ENCODE measurements at regions of chr19 and their contacts with region 1.

Region 1: GRCh38 chr19:58408152-58409009 is at the start of gene ZNF584:
- DNase-seq: peak; percentile 94
- H3K4me3 ChIP-seq: peak within 1 kb of the TSS; percentile 51 to 93 (median 66)
- H3K27ac ChIP-seq: peak within 1 kb of the TSS; percentile 27
- H3K4me1 ChIP-seq: peaks cover 15% of the 10 kb centered on the region
- H3K27me3 ChIP-seq: no peaks in the 10 kb centered on the region
- CTCF ChIP-seq: peak in 1 of 2 donors; percentile 33
- POLR2A ChIP-seq: peak; percentile 97
- total RNA-seq, gene ZNF584: 12.4 and 12.6 TPM in 2 replicates

Region 2: DNA sequence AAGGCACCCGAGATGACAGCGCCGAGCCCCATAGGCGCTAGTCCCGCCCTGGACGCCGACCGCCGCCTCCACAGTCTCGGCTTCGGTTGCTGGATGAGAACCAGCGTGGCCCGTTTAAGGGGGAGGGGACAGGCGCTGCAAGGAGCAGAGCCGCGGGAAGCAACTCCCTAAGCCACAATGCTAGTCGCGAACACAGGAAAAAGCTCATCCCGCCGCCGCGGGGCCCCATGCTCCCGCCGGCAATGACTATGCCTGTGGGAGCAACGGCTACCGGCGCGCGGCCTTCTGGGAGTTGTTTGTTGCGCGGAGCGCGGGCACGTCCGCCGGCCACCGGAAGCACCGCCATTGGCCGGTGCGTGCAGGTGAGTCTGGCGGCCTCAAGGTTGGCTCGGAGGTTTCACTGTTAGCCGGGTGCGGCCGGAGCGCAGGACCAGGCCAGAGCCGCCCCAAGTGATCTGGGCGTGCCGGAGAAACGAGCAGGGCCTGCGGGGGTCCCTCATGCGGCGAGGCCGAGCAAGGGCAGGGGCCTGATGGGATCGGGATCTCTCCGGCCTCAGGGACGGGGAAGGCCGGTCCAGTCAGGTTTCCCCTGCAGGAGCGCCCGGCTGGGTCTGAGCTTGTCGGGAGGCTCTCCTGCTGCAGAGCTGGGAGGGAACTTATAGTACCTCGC is 179.7 kb before region 1 on chr19 and contains the start of gene ZNF544:
- CTCF ChIA-PET with region 1: no interaction called
- POLR2A ChIA-PET with region 1: no interaction called
- dilution Hi-C with region 1: no loop called
- intact Hi-C with region 1: loop called (anchors 2 kb)
- DNase-seq: peak; percentile 84
- H3K4me3 ChIP-seq: peak within 1 kb of the TSS; percentile 53 to 66 (median 61)
- H3K27ac ChIP-seq: peak within 1 kb of the TSS; percentile 42
- H3K4me1 ChIP-seq: peaks cover 10% of the 10 kb centered on the region
- H3K27me3 ChIP-seq: no peaks in the 10 kb centered on the region
- CTCF ChIP-seq: peak; percentile 6 to 40
- POLR2A ChIP-seq: peak; percentile 92
- total RNA-seq, gene ZNF544: 39.3 and 45.4 TPM in 2 replicates

Region 3: GRCh38 chr19:58362272-58362994 is 45.9 kb before region 1 on chr19 and contains the start of gene ZNF497:
- CTCF ChIA-PET with region 1: interaction called, 3 read pairs
- POLR2A ChIA-PET with region 1: interaction called, 3 read pairs
- dilution Hi-C with region 1: no loop called
- intact Hi-C with region 1: loop called (anchors 1 kb)
- DNase-seq: peak; percentile 98
- H3K4me3 ChIP-seq: peak within 1 kb of the TSS; percentile 35 to 66 (median 51)
- H3K27ac ChIP-seq: peak within 1 kb of the TSS; percentile 57
- H3K4me1 ChIP-seq: peaks cover 3% of the 10 kb centered on the region
- H3K27me3 ChIP-seq: peaks cover 12 to 14% of the 10 kb centered on the region in 2 experiments
- CTCF ChIP-seq: peak in 1 of 2 donors; percentile 9
- POLR2A ChIP-seq: peak; percentile 93
- total RNA-seq, gene ZNF497: 0.42 and 1.3 TPM in 2 replicates

Region 4: DNA sequence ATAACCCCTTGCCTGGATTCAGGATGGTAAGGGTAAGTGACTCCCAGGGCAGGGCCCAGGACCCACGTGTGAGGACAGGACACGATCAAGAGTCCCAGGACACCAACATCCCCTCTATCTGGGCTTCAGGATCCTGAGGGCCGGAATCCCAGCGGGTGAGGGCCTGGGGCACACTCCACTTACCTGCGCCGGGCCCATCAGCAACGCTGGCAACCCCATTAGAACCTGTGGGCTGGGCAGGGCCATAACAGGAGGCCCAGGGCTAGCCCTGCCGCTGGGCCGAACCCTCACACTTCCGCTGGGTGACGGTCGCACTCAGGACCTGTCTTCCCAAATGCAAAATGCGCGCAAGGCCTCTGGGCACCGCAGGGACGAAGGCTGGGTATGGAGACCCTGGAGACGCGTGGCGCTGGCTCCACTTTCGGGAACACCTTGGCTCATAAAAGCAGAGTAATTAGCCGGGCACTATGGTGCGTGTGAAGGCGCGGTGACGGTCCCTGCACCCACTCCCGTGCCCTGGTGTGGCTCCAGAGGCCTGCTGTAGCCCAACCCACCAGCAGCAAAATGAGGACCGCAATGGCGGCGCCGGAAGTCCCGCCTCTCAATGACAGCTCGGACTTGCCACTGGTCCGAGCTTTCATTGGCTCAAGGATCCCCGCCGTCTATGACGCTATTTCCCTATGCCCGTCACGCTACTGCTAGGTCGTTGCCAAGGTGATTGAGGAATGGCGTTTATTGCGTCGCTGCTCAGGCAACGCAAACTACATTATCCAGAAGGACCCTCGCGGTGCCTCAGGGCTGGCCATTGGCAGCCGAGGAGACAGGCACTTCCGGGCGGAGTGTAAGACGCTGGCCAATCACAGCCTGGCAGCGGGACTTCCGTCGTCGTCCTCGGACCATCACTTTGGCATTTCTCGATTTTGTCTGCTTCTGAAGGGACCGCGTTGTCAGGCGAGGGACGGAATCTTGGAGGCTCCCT is 31.5 kb after region 1 on chr19 and contains the start of gene ZNF132:
- CTCF ChIA-PET with region 1: no interaction called
- POLR2A ChIA-PET with region 1: interaction called, 3 read pairs
- dilution Hi-C with region 1: no loop called
- intact Hi-C with region 1: loop called (anchors 1 kb)
- DNase-seq: peak; percentile 100
- H3K4me3 ChIP-seq: peak within 1 kb of the TSS; percentile 31 to 83 (median 57)
- H3K27ac ChIP-seq: peak within 1 kb of the TSS; percentile 48
- H3K4me1 ChIP-seq: peaks cover 7% of the 10 kb centered on the region
- H3K27me3 ChIP-seq: peaks cover 0 to 2% of the 10 kb centered on the region in 2 experiments
- CTCF ChIP-seq: no peak
- POLR2A ChIP-seq: peak; percentile 67
- total RNA-seq, gene ZNF132: 4.1 and 4.2 TPM in 2 replicates

Region 5: GRCh38 chr19:58475714-58476497 is 67.5 kb after region 1 on chr19 and contains the start of gene ZNF446:
- CTCF ChIA-PET with region 1: no interaction called
- POLR2A ChIA-PET with region 1: no interaction called
- dilution Hi-C with region 1: no loop called
- intact Hi-C with region 1: no loop called
- DNase-seq: peak; percentile 97
- H3K4me3 ChIP-seq: peak within 1 kb of the TSS; percentile 49 to 70 (median 56)
- H3K27ac ChIP-seq: peak within 1 kb of the TSS; percentile 73
- H3K4me1 ChIP-seq: peaks cover 9% of the 10 kb centered on the region
- H3K27me3 ChIP-seq: no peaks in the 10 kb centered on the region
- CTCF ChIP-seq: no peak
- POLR2A ChIP-seq: peak; percentile 70
- total RNA-seq, gene ZNF446: 6.6 and 7.0 TPM in 2 replicates

Region 6: GRCh38 chr19:58499021-58499927 is 90.9 kb after region 1 on chr19:
- CTCF ChIA-PET with region 1: no interaction called
- POLR2A ChIA-PET with region 1: no interaction called
- dilution Hi-C with region 1: no loop called
- intact Hi-C with region 1: loop called (anchors 1 kb)
- DNase-seq: peak; percentile 96
- H3K4me3 ChIP-seq: peak overlapping the region in 2 of 3 experiments; percentile 24 to 45
- H3K27ac ChIP-seq: no peak overlapping the region
- H3K4me1 ChIP-seq: peaks cover 4% of the 10 kb centered on the region
- H3K27me3 ChIP-seq: no peaks in the 10 kb centered on the region
- CTCF ChIP-seq: peak; percentile 19 to 43
- POLR2A ChIP-seq: peak; percentile 73